ENCODE measurements at regions of chr19 and their contacts with region 1.

Region 1: GRCh38 chr19:51777570-51778462 is 16.8 kb downstream of the FPR2 start:
- DNase-seq: peak; percentile 11
- H3K4me3 ChIP-seq: no peak overlapping the region
- H3K27me3 ChIP-seq: no peaks in the 10 kb centered on the region
- CTCF ChIP-seq: peak; percentile 75

Region 2: DNA sequence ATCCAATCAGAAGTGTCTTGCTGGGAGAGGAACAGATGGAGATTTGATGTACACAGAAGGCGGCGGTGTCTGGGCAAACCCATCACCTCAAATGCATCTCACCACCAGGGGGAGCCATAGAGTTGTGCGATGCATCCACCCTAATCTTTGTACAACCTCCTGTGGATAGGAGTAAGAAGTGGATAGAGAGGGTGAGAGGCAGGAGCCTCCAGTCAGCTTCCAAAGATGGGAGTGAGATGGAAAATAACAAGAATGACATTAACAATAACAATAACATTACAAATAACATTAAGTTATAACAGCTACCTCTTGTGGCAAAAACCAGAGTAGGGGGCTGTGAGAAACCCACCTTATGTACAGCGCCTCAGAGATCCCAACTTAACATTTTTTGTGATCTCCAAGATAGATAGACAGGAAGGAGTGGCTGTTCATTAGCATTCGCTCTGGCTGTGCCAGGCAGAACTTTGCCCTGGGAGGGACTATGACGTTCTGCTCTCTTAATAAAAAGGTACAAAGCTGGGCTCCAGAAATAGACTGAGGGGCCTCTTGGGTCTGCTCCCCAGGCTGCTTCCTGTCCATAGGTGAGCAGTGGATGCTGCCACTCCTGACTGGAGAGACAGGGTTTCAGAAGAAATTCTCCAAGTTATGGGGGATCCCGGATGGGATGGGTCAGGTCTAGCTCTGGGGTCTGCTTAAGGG is 304.7 kb before region 1 on chr19:
- CTCF ChIA-PET with region 1: interaction called, 29 read pairs
- POLR2A ChIA-PET with region 1: no interaction called
- DNase-seq: no peak
- H3K4me3 ChIP-seq: no peak overlapping the region
- H3K27me3 ChIP-seq: no peaks in the 10 kb centered on the region
- CTCF ChIP-seq: peak; percentile 87

Region 3: GRCh38 chr19:51799034-51799773 is 21.4 kb after region 1 on chr19:
- CTCF ChIA-PET with region 1: interaction called, 10 read pairs
- POLR2A ChIA-PET with region 1: no interaction called
- DNase-seq: peak; percentile 66
- H3K4me3 ChIP-seq: no peak overlapping the region
- H3K27me3 ChIP-seq: no peaks in the 10 kb centered on the region
- CTCF ChIP-seq: 0 out of 2 replicates have a peak, but pooled peaks have one; percentile 19

Region 4: GRCh38 chr19:51808333-51808986 is 30.6 kb after region 1 on chr19:
- CTCF ChIA-PET with region 1: interaction called, 10 read pairs
- POLR2A ChIA-PET with region 1: no interaction called
- DNase-seq: no peak
- H3K4me3 ChIP-seq: no peak overlapping the region
- H3K27me3 ChIP-seq: no peaks in the 10 kb centered on the region
- CTCF ChIP-seq: peak; percentile 10; the same call in 1 of the 2 replicates

Measured in BJ (cell line).